ENCODE measurements at regions of chr1 and their contacts with region 1.

Region 1: GRCh38 chr1:156226116-156226538 is 13.3 kb downstream of the PMF1 start:
- DNase-seq: no peak
- ATAC-seq: no peak
- H3K4me3 ChIP-seq: no peak overlapping the region
- H3K27ac ChIP-seq: no peak overlapping the region
- H3K4me1 ChIP-seq: peaks cover 4 to 14% of the 10 kb centered on the region in 2 experiments; a peak in 3 of 4 replicates
- H3K27me3 ChIP-seq: no peaks in the 10 kb centered on the region
- CTCF ChIP-seq: no peak
- POLR2A ChIP-seq: no peak
- RAD21 ChIP-seq: no peak

Region 2: GRCh38 chr1:156090822-156091188 is 135.3 kb before region 1 on chr1:
- CTCF ChIA-PET with region 1: interaction called, 21 read pairs
- POLR2A ChIA-PET with region 1: no interaction called
- RAD21 ChIA-PET with region 1: interaction called in 1 of 2 experiments, 11 read pairs
- intact Hi-C with region 1: loop called (anchors 1 kb)
- DNase-seq: peak; percentile 73
- ATAC-seq: peak; percentile 95
- H3K4me3 ChIP-seq: no peak overlapping the region
- H3K27ac ChIP-seq: peak overlapping the region; percentile 40; the same call in 1 of the 2 replicates
- H3K4me1 ChIP-seq: peaks cover 18 to 30% of the 10 kb centered on the region in 2 experiments
- H3K27me3 ChIP-seq: no peaks in the 10 kb centered on the region
- CTCF ChIP-seq: peak; percentile 61 to 96 (median 80)
- POLR2A ChIP-seq: no peak
- RAD21 ChIP-seq: peak; percentile 97

Region 3: GRCh38 chr1:156096640-156097391 is 129.3 kb before region 1 on chr1:
- CTCF ChIA-PET with region 1: interaction called, 21 read pairs
- POLR2A ChIA-PET with region 1: no interaction called
- RAD21 ChIA-PET with region 1: interaction called in 1 of 2 experiments, 7 read pairs
- intact Hi-C with region 1: no loop called
- DNase-seq: peak; percentile 54
- ATAC-seq: peak; percentile 96
- H3K4me3 ChIP-seq: no peak overlapping the region
- H3K27ac ChIP-seq: peak overlapping the region; percentile 30
- H3K4me1 ChIP-seq: peaks cover 33 to 66% of the 10 kb centered on the region in 2 experiments
- H3K27me3 ChIP-seq: no peaks in the 10 kb centered on the region
- CTCF ChIP-seq: peak in 2 of 3 experiments; percentile 98 to 99; a peak in 4 of 6 replicates
- POLR2A ChIP-seq: no peak
- RAD21 ChIP-seq: no peak

Region 4: GRCh38 chr1:156146020-156146768 is 79.9 kb before region 1 on chr1:
- CTCF ChIA-PET with region 1: interaction called, 98 read pairs
- POLR2A ChIA-PET with region 1: no interaction called
- RAD21 ChIA-PET with region 1: interaction called, 6 to 19 read pairs
- intact Hi-C with region 1: loop called (anchors 1 kb)
- DNase-seq: peak; percentile 74
- ATAC-seq: peak; percentile 82
- H3K4me3 ChIP-seq: no peak overlapping the region
- H3K27ac ChIP-seq: no peak overlapping the region
- H3K4me1 ChIP-seq: peaks cover 9 to 17% of the 10 kb centered on the region in 2 experiments
- H3K27me3 ChIP-seq: no peaks in the 10 kb centered on the region; the same call in 1 of the 2 replicates
- CTCF ChIP-seq: peak; percentile 61 to 91 (median 82)
- POLR2A ChIP-seq: no peak
- RAD21 ChIP-seq: peak; percentile 91

Region 5: DNA sequence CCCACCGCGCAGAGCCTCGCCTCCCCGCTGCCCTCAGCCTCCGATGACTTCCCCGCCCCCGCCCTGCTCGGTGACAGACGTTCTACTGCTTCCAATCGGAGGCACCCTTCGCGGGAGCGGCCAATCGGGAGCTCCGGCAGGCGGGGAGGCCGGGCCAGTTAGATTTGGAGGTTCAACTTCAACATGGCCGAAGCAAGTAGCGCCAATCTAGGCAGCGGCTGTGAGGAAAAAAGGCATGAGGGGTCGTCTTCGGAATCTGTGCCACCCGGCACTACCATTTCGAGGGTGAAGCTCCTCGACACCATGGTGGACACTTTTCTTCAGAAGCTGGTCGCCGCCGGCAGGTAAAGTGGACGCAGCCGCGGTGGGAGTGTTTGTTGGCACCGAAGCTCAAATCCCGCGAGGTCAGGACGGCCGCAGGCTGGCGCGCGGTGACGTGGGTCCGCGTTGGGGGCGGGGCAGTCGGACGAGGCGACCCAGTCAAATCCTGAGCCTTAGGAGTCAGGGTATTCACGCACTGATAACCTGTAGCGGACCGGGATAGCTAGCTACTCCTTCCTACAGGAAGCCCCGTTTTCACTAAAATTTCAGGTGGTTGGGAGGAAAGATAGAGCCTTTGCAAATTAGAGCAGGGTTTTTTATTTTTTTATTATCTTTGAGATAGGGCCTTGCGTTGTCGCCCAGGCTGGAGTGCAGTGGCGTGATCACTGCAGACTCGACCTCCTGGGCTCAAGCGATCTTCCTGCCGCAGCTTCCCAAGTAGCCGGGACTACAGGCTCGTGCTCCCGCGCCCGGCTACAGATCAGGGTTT is 13.1 kb before region 1 on chr1 and contains the start of gene PMF1:
- CTCF ChIA-PET with region 1: interaction called, 45 read pairs
- POLR2A ChIA-PET with region 1: interaction called, 25 read pairs
- RAD21 ChIA-PET with region 1: no interaction called
- intact Hi-C with region 1: no loop called
- DNase-seq: peak; percentile 91
- ATAC-seq: peak; percentile 95
- H3K4me3 ChIP-seq: peak within 1 kb of the TSS; percentile 85 to 96
- H3K27ac ChIP-seq: peak within 1 kb of the TSS; percentile 75
- H3K4me1 ChIP-seq: peaks cover 10 to 21% of the 10 kb centered on the region in 2 experiments
- H3K27me3 ChIP-seq: no peaks in the 10 kb centered on the region
- CTCF ChIP-seq: no peak
- POLR2A ChIP-seq: peak; percentile 78
- RAD21 ChIP-seq: no peak
- total RNA-seq, gene PMF1: 52.6 TPM